ENCODE measurements at regions of chr3 and their contacts with region 1.

Region 1: DNA sequence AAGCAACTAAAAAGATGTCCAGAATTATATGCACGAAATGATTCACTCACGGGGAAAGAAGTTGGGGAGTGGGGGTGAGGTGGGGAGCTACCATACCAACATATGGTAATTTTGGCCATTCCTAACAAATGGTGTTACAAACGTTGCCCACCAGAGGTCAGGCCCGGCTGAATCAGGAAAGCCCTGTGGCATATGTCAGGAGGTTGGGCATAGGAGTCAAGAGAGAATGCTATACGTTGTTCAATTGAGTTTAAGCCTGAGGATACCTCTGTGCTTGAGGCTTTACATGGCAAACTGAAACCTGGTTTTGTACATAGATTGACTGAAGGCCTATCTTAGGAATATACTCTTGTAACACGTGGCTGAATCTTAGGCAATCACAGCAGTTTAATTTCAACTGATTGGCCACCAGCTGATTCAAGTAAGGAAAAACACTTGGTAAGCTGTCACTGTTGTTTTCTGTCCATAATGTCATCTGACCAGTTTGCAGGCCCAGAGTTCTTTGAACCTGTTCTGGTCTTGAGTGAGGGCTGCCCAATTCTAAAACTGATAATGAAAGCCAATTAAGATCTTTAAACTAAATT is 23.4 kb upstream of the SLC2A2 start:
- DNase-seq: peak in 1 of 3 donors; percentile 10
- H3K4me3 ChIP-seq: no peak overlapping the region
- H3K4me3 Mint-ChIP-seq: no peak overlapping the region
- H3K27ac ChIP-seq: no peak overlapping the region
- H3K27ac Mint-ChIP-seq: no peak overlapping the region
- H3K4me1 ChIP-seq: no peaks in the 10 kb centered on the region
- H3K4me1 Mint-ChIP-seq: no peaks in the 10 kb centered on the region
- H3K27me3 ChIP-seq: no peaks in the 10 kb centered on the region
- H3K27me3 Mint-ChIP-seq: no peaks in the 10 kb centered on the region
- CTCF ChIP-seq: peak; percentile 34

Region 2: GRCh38 chr3:170205302-170205701 is 844.7 kb before region 1 on chr3:
- intact Hi-C with region 1: loop called in 1 of 2 experiments (anchors 10 kb)
- DNase-seq: no peak
- H3K4me3 ChIP-seq: no peak overlapping the region
- H3K4me3 Mint-ChIP-seq: no peak overlapping the region
- H3K27ac ChIP-seq: no peak overlapping the region
- H3K27ac Mint-ChIP-seq: no peak overlapping the region
- H3K4me1 ChIP-seq: no peaks in the 10 kb centered on the region
- H3K4me1 Mint-ChIP-seq: peaks cover 6% of the 10 kb centered on the region
- H3K27me3 ChIP-seq: no peaks in the 10 kb centered on the region
- H3K27me3 Mint-ChIP-seq: peaks cover 0 to 2% (median 2%) of the 10 kb centered on the region in 3 donors
- CTCF ChIP-seq: no peak

Region 3: DNA sequence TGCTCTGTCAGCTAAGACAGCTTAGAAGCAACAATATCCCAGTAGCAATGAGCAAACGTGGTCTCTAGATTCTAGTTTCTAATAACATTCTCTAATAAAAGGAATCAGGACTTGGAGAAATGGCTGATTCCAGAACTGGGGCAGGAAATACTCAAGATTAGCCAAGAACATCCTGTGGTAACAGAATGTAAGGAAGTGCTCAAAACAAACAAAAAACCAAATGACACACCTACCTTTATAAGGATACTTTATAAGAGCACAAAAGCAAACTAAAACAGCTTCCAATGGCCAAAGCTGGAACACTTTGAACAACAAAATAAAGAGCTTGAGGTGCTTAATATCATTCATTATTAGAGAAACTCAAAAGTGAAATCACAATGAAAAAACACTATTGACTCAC is 108.4 kb before region 1 on chr3:
- intact Hi-C with region 1: no loop called
- DNase-seq: no peak
- H3K4me3 ChIP-seq: no peak overlapping the region
- H3K4me3 Mint-ChIP-seq: no peak overlapping the region
- H3K27ac ChIP-seq: no peak overlapping the region
- H3K27ac Mint-ChIP-seq: no peak overlapping the region
- H3K4me1 ChIP-seq: no peaks in the 10 kb centered on the region
- H3K4me1 Mint-ChIP-seq: no peaks in the 10 kb centered on the region
- H3K27me3 ChIP-seq: no peaks in the 10 kb centered on the region
- H3K27me3 Mint-ChIP-seq: peaks cover 0 to 4% (median 0%) of the 10 kb centered on the region in 3 donors
- CTCF ChIP-seq: no peak

Region 4: GRCh38 chr3:171101982-171102641 is 52.2 kb after region 1 on chr3:
- intact Hi-C with region 1: no loop called
- DNase-seq: no peak
- H3K4me3 ChIP-seq: no peak overlapping the region
- H3K4me3 Mint-ChIP-seq: no peak overlapping the region
- H3K27ac ChIP-seq: no peak overlapping the region
- H3K27ac Mint-ChIP-seq: no peak overlapping the region
- H3K4me1 ChIP-seq: no peaks in the 10 kb centered on the region
- H3K4me1 Mint-ChIP-seq: no peaks in the 10 kb centered on the region
- H3K27me3 ChIP-seq: no peaks in the 10 kb centered on the region
- H3K27me3 Mint-ChIP-seq: peaks cover 0 to 3% (median 0%) of the 10 kb centered on the region in 3 donors
- CTCF ChIP-seq: no peak

Measured in CD14-positive monocyte (primary cell).